Activated CD4-positive, alpha-beta T cell treated with anti-CD3 and anti-CD28 coated beads, Interleukin-2, amount 10 ng/mL, durations not matched to agents 7 days and 5 days (primary cell): ENCODE measurements at regions of chrX and their contacts with region 1.

Region 1: DNA sequence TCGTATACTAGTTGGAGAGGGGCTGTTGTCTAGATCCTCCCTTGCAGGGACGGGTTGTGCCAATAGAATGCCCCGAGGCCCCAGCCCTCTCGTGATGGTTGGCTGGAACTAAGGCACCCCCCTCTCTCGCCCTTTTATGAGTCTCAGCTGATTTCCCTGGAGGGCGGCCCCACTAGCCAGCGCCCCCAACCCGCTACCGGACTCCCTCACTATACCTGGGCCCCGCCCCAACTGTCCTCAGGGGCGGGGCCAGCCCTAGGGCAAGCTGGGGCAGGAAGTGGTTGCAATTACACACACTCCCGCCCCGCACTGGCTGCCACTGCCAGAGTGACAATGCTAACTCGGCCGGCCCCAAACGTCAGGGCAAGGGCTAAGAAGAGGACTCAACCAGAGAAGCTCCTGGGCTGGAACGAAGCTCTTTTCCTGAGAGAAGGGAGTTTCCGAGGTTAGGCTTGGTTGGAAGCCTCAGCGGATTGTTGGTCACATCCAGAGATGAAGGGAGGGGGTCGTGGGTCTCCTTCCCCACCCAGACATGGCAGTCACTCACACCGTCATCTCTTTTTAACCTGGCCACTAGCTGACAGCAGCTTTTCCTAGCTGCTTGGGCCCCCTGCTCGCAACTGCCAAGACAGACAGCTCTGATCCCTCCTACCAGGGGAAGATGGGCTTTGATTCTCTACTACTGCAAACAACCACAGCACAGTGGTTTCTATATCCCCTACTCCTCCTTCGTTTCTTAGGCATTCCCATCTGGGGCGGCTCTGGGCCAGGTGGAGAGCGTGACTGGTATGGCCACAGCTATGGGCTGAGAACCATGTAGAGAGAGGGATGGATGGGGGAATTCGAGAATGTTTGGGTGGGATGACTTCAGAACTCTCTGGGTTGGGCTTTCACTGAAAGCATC is 21.0 kb upstream of the BCORL1 start:
- DNase-seq: peak; percentile 78
- H3K4me3 Mint-ChIP-seq: peak overlapping the region; percentile 60
- H3K27ac Mint-ChIP-seq: peak overlapping the region; percentile 92
- H3K4me1 Mint-ChIP-seq: peaks cover 32% of the 10 kb centered on the region
- H3K27me3 Mint-ChIP-seq: no peaks in the 10 kb centered on the region

Region 2: GRCh38 chrX:129980001-129980401 is 18.6 kb after region 1 on chrX:
- CTCF ChIA-PET with region 1: interaction called, 14 read pairs
- POLR2A ChIA-PET with region 1: no interaction called
- DNase-seq: no peak
- H3K4me3 Mint-ChIP-seq: no peak overlapping the region
- H3K27ac Mint-ChIP-seq: no peak overlapping the region
- H3K4me1 Mint-ChIP-seq: peaks cover 18% of the 10 kb centered on the region
- H3K27me3 Mint-ChIP-seq: peaks cover 17% of the 10 kb centered on the region

Region 3: GRCh38 chrX:130055103-130055502 is 93.7 kb after region 1 on chrX:
- CTCF ChIA-PET with region 1: no interaction called
- POLR2A ChIA-PET with region 1: no interaction called
- DNase-seq: no peak
- H3K4me3 Mint-ChIP-seq: no peak overlapping the region
- H3K27ac Mint-ChIP-seq: peak overlapping the region; percentile 79
- H3K4me1 Mint-ChIP-seq: peaks cover 3% of the 10 kb centered on the region
- H3K27me3 Mint-ChIP-seq: no peaks in the 10 kb centered on the region